CD4-positive, alpha-beta memory T cell (primary cell): ENCODE measurements at regions of chr9 and their contacts with region 1.

Region 1: GRCh38 chr9:120755827-120756434 is 37.3 kb downstream of the FBXW2 start:
- DNase-seq: peak; percentile 58 to 75 (median 63)
- H3K4me3 ChIP-seq: no peak overlapping the region
- H3K4me3 Mint-ChIP-seq: no peak overlapping the region
- H3K27ac ChIP-seq: no peak overlapping the region
- H3K27ac Mint-ChIP-seq: peak overlapping the region in 6 of 7 donors; percentile 13 to 79 (median 49)
- H3K4me1 ChIP-seq: no peaks in the 10 kb centered on the region
- H3K4me1 Mint-ChIP-seq: peaks cover 0 to 6% (median 5%) of the 10 kb centered on the region in 4 donors
- H3K27me3 ChIP-seq: no peaks in the 10 kb centered on the region
- H3K27me3 Mint-ChIP-seq: no peaks in the 10 kb centered on the region

Region 2: DNA sequence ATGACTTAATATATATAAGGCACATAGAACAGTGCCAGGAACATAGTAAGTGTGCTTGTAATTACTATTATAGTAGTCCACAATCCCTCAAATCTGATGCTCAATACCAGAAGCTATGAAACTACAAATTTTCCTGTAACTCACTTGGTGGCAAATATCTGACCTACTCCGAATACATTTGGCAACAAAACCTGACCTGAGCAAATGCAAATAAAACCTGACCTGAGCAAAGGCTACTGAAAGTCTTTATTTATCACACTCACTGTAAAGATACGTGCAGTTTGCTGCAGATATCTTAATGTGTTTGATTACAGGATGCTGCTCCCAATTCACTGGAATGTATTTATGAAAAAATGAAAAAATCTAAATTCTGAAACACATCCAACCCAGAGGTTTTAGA is 48.8 kb before region 1 on chr9:
- CTCF ChIA-PET with region 1: no interaction called
- POLR2A ChIA-PET with region 1: no interaction called
- intact Hi-C with region 1: no loop called
- DNase-seq: no peak
- H3K4me3 ChIP-seq: no peak overlapping the region
- H3K4me3 Mint-ChIP-seq: no peak overlapping the region
- H3K27ac ChIP-seq: no peak overlapping the region
- H3K27ac Mint-ChIP-seq: peak overlapping the region in 1 of 7 donors; percentile 64
- H3K4me1 ChIP-seq: peaks cover 39% of the 10 kb centered on the region
- H3K4me1 Mint-ChIP-seq: peaks cover 17 to 48% (median 32%) of the 10 kb centered on the region in 4 donors
- H3K27me3 ChIP-seq: no peaks in the 10 kb centered on the region
- H3K27me3 Mint-ChIP-seq: no peaks in the 10 kb centered on the region

Region 3: DNA sequence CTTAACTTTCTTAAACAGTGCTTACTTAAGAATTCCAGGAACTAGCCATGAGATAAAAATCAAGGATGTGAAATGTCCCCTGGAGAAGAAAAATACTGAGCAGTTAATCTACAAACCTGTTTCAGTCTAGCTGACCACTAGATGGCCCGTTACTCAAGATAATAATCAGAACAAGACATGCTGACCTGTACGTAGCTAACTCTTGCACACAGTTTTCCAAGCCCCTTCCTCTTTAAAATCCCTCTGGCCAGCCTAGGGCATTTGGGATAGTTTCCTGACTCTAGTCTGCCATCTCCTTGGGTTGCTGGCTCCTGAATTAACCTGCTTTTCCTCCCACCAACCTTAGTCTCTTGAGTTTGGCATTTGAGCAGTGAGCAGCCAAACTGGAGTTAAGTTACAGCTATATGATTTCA is 229.9 kb after region 1 on chr9:
- CTCF ChIA-PET with region 1: interaction called, 19 read pairs
- POLR2A ChIA-PET with region 1: no interaction called
- intact Hi-C with region 1: loop called (anchors 5 kb)
- DNase-seq: no peak
- H3K4me3 ChIP-seq: no peak overlapping the region
- H3K4me3 Mint-ChIP-seq: no peak overlapping the region
- H3K27ac ChIP-seq: no peak overlapping the region
- H3K27ac Mint-ChIP-seq: no peak overlapping the region
- H3K4me1 ChIP-seq: no peaks in the 10 kb centered on the region
- H3K4me1 Mint-ChIP-seq: peaks cover 0 to 5% (median 2%) of the 10 kb centered on the region in 4 donors
- H3K27me3 ChIP-seq: no peaks in the 10 kb centered on the region
- H3K27me3 Mint-ChIP-seq: peaks cover 0 to 2% of the 10 kb centered on the region in 2 donors

Region 4: GRCh38 chr9:121222524-121223171 is 466.7 kb after region 1 on chr9:
- CTCF ChIA-PET with region 1: no interaction called
- POLR2A ChIA-PET with region 1: no interaction called
- intact Hi-C with region 1: no loop called
- DNase-seq: no peak
- H3K4me3 ChIP-seq: no peak overlapping the region
- H3K4me3 Mint-ChIP-seq: no peak overlapping the region
- H3K27ac ChIP-seq: no peak overlapping the region
- H3K27ac Mint-ChIP-seq: no peak overlapping the region
- H3K4me1 ChIP-seq: no peaks in the 10 kb centered on the region
- H3K4me1 Mint-ChIP-seq: no peaks in the 10 kb centered on the region
- H3K27me3 ChIP-seq: no peaks in the 10 kb centered on the region
- H3K27me3 Mint-ChIP-seq: no peaks in the 10 kb centered on the region